Dendritic cell treated with granulocyte-macrophage colony-stimulating factor and Interleukin-4, amounts not matched to agents 40 ng/mL and 50 ng/mL, for 4 days (primary cell): ENCODE measurements at regions of chr5 and their contacts with region 1.

Region 1: GRCh38 chr5:147558826-147559225 is 49.0 kb upstream of the DPYSL3 start:
- H3K4me3 Mint-ChIP-seq: no peak overlapping the region
- H3K27ac Mint-ChIP-seq: no peak overlapping the region
- H3K4me1 Mint-ChIP-seq: no peaks in the 10 kb centered on the region
- H3K27me3 Mint-ChIP-seq: peaks cover 5% of the 10 kb centered on the region

Region 2: GRCh38 chr5:147464211-147464610 is 94.6 kb before region 1 on chr5:
- intact Hi-C with region 1: loop called (anchors 1 kb)
- H3K4me3 Mint-ChIP-seq: no peak overlapping the region
- H3K27ac Mint-ChIP-seq: no peak overlapping the region
- H3K4me1 Mint-ChIP-seq: no peaks in the 10 kb centered on the region
- H3K27me3 Mint-ChIP-seq: no peaks in the 10 kb centered on the region